Breast epithelium (tissue), 4 donors: ENCODE measurements at regions of chr15 and their contacts with region 1.

Region 1: GRCh38 chr15:42465520-42466259 is 25.3 kb downstream of the ZNF106 start:
- DNase-seq: no peak
- H3K4me3 ChIP-seq: no peak overlapping the region
- H3K27ac ChIP-seq: no peak overlapping the region
- H3K4me1 ChIP-seq: no peaks in the 10 kb centered on the region
- H3K27me3 ChIP-seq: no peaks in the 10 kb centered on the region
- CTCF ChIP-seq: no peak
- POLR2A ChIP-seq: no peak

Region 2: GRCh38 chr15:43118829-43119228 is 653.1 kb after region 1 on chr15:
- intact Hi-C with region 1: loop called (anchors 5 kb)
- DNase-seq: no peak
- H3K4me3 ChIP-seq: no peak overlapping the region
- H3K27ac ChIP-seq: no peak overlapping the region
- H3K4me1 ChIP-seq: no peaks in the 10 kb centered on the region
- H3K27me3 ChIP-seq: no peaks in the 10 kb centered on the region
- CTCF ChIP-seq: no peak
- POLR2A ChIP-seq: no peak

Region 3: DNA sequence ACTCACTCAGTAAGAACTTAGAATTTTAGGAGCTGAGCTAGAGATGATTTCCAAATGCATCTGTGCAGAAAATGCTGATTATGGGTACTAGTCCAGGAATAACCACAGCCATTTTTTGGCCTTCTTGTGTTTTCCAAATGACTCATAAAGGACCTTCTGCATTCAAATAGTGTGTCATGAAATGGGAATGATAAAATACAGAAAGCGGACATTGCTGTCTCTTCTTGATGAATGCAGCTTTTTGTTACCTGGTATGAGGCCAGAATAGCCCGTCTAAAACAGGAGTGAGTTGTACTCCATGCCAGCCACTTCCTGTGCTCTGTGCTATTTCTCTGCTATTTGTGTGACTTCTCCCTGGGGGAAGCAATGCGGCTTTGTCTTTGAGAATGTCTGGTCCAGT is 1749.9 kb after region 1 on chr15:
- intact Hi-C with region 1: no loop called
- DNase-seq: no peak
- H3K4me3 ChIP-seq: no peak overlapping the region
- H3K27ac ChIP-seq: no peak overlapping the region
- H3K4me1 ChIP-seq: no peaks in the 10 kb centered on the region
- H3K27me3 ChIP-seq: peaks cover 0 to 8% of the 10 kb centered on the region in 2 donors
- CTCF ChIP-seq: no peak
- POLR2A ChIP-seq: no peak